ENCODE measurements at regions of chr12 and their contacts with region 1.

Region 1: DNA sequence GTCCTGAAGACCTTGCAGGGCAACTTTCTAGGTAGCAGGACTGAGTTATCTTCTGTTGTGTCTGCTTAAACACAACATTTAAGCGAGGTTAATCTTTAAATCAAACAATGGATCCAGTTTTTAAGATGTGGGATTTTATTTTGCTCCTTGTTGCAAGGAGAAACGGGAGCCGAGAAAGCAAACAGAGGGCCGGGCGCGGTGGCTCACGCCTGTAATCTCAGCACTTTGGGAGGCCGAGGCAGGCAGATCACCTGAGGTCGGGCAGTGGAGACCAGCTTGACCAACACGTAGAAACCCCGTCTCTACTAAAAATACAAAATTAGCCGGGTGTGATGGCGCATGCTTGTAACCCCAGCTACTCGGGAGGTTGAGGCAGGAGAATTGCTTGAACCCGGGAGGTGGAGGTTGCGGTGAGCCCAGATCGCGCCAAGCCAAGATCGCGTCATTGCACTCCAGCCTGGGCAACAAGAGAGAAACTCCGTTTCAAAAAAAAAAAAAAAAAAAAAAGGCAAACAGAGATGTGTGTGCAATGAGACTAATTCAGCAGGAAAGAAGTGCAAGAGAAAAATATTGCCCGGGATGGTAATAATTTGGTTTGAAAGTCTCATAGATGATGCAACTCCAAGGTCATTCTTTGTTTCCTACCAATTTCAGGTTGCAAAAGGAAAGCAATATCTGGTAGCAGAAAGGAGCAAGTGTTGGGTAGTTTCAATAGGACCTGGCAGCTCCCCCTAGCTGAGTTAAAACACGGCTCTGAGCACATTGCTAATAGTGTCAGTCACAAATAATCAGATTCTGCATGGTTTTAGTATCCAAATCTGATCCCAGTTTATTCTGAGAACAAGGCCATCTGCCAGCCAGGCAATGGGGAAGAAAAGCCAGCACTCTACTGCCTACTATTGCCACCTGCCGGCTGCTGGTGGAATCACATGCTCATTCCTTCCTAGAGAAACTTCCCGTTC is 141.4 kb downstream of the PPM1H start:
- DNase-seq: peak; percentile 81
- H3K4me3 ChIP-seq: peak overlapping the region in 1 of 2 experiments; percentile 22; a peak in 1 of 4 replicates
- H3K27ac ChIP-seq: peak overlapping the region; percentile 11 to 49; a peak in 3 of 4 replicates
- H3K4me1 ChIP-seq: peaks cover 2 to 11% of the 10 kb centered on the region in 2 experiments; a peak in 2 of 4 replicates
- H3K27me3 ChIP-seq: no peaks in the 10 kb centered on the region
- CTCF ChIP-seq: peak; percentile 96
- EP300 ChIP-seq: peak in 1 of 2 experiments; percentile 48; a peak in 1 of 4 replicates
- RAD21 ChIP-seq: peak; percentile 97

Region 2: GRCh38 chr12:62581288-62582064 is 212.1 kb before region 1 on chr12:
- CTCF ChIA-PET with region 1: interaction called, 200 read pairs
- POLR2A ChIA-PET with region 1: no interaction called
- DNase-seq: peak; percentile 39
- H3K4me3 ChIP-seq: no peak overlapping the region; a peak in 1 of 4 replicates
- H3K27ac ChIP-seq: no peak overlapping the region
- H3K4me1 ChIP-seq: no peaks in the 10 kb centered on the region
- H3K27me3 ChIP-seq: no peaks in the 10 kb centered on the region
- CTCF ChIP-seq: peak; percentile 78
- EP300 ChIP-seq: no peak
- RAD21 ChIP-seq: peak; percentile 82

Region 3: GRCh38 chr12:62588916-62589315 is 204.6 kb before region 1 on chr12:
- CTCF ChIA-PET with region 1: interaction called, 200 read pairs
- POLR2A ChIA-PET with region 1: no interaction called
- DNase-seq: no peak
- H3K4me3 ChIP-seq: no peak overlapping the region
- H3K27ac ChIP-seq: peak overlapping the region in 1 of 2 experiments; percentile 57; a peak in 2 of 4 replicates
- H3K4me1 ChIP-seq: peaks cover 0 to 5% of the 10 kb centered on the region in 2 experiments; a peak in 1 of 4 replicates
- H3K27me3 ChIP-seq: no peaks in the 10 kb centered on the region
- CTCF ChIP-seq: no peak
- EP300 ChIP-seq: no peak
- RAD21 ChIP-seq: no peak

Region 4: DNA sequence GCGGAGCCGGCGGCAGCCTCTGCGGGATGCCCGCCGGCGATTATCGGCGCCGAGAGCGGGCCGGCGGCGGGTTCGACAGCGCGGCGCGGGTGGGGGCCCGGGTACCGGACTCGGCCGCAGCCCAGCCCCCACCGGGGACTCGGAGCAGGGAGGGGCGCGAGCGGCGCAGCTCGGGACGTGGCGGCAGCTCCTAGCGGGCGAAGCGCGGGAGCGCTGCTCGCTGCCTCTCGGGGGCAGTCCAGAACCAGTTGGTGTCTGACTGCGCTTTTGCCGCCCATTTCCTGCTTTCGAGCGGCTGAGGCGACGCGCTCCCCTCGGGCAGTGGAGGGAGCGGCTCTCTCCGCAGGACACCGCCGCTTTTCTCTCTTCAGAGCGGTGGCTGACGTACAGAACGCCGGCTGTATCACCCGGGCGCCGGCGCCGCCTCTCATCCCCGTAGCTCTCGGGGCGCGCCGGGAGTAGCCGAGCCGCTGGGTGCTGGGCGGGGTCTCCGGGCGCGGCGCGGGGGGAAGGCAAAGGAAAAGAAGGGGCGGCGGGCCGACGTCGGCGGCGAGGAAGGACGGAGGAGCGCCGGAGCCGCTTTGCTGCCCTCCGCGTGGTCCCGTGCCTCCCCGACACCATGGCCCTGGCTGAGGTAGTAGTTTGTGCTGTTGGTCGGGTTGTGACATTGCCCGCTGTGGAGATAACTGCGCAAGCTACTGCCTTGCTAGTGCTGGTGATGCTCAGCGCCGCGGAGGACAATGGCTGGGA is 190.3 kb before region 1 on chr12:
- CTCF ChIA-PET with region 1: interaction called, 42 read pairs
- POLR2A ChIA-PET with region 1: interaction called, 9 read pairs
- DNase-seq: peak; percentile 90
- H3K4me3 ChIP-seq: peak overlapping the region; percentile 88 to 91
- H3K27ac ChIP-seq: peak overlapping the region; percentile 98 to 100
- H3K4me1 ChIP-seq: no peaks in the 10 kb centered on the region; a peak in 2 of 4 replicates
- H3K27me3 ChIP-seq: no peaks in the 10 kb centered on the region
- CTCF ChIP-seq: peak; percentile 42
- EP300 ChIP-seq: peak in 1 of 2 experiments; percentile 20; a peak in 1 of 4 replicates
- RAD21 ChIP-seq: peak; percentile 53

Region 5: DNA sequence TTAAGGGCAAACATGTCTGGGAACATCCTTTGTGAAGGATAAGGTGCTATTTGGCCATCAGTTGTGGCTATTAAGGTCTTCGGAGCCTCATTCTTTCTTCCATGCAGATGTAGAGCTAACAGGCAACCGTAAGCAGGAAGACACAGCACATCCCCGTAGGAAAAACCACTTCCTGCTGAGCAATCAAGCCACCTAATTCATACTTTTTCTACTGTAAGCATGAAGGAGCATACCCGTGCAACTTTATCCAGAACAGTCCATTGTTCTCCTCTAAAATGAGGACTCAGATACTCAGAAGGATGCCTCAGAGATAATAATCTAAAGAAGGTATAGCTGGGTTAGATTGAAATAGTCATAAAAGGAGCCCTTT is 90.5 kb before region 1 on chr12:
- CTCF ChIA-PET with region 1: no interaction called
- POLR2A ChIA-PET with region 1: no interaction called
- DNase-seq: no peak
- H3K4me3 ChIP-seq: peak overlapping the region in 1 of 2 experiments; percentile 33; a peak in 1 of 4 replicates
- H3K27ac ChIP-seq: peak overlapping the region; percentile 72 to 97; a peak in 3 of 4 replicates
- H3K4me1 ChIP-seq: peaks cover 10 to 41% of the 10 kb centered on the region in 2 experiments; a peak in 3 of 4 replicates
- H3K27me3 ChIP-seq: no peaks in the 10 kb centered on the region
- CTCF ChIP-seq: no peak
- EP300 ChIP-seq: no peak
- RAD21 ChIP-seq: no peak

Region 6: GRCh38 chr12:62763861-62764645 is 29.5 kb before region 1 on chr12:
- CTCF ChIA-PET with region 1: interaction called, 11 read pairs
- POLR2A ChIA-PET with region 1: no interaction called
- DNase-seq: no peak
- H3K4me3 ChIP-seq: no peak overlapping the region
- H3K27ac ChIP-seq: peak overlapping the region in 1 of 2 experiments; percentile 55; a peak in 1 of 4 replicates
- H3K4me1 ChIP-seq: no peaks in the 10 kb centered on the region; a peak in 1 of 4 replicates
- H3K27me3 ChIP-seq: no peaks in the 10 kb centered on the region
- CTCF ChIP-seq: no peak
- EP300 ChIP-seq: no peak
- RAD21 ChIP-seq: no peak

Region 7: DNA sequence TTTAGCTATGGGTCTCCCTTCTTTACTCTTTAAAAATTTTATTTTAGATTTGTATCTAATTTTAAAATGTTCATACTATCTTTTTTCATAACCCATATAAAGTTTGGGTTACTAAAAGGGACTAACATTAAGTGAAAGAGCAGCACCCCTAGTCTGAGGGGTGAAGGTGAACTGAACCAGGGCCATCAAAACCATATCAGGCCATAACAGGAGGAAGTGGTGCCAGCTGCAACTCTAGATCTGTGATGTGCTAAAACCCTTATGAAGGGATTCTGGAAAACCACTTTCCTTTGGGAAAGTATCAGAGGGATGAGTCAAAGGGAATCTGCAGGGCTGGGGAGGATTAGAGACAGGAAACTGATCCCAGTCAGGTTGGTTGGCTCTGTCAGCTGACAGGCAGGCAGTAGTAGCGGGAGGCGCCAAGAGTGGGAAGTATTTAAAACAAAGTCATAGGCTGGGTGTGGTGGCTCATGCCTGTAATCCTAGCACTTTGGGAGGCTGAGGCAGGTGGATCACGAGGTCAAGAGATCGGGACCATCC is 21.1 kb before region 1 on chr12:
- CTCF ChIA-PET with region 1: interaction called, 11 read pairs
- POLR2A ChIA-PET with region 1: no interaction called
- DNase-seq: no peak
- H3K4me3 ChIP-seq: no peak overlapping the region
- H3K27ac ChIP-seq: no peak overlapping the region
- H3K4me1 ChIP-seq: no peaks in the 10 kb centered on the region
- H3K27me3 ChIP-seq: no peaks in the 10 kb centered on the region
- CTCF ChIP-seq: no peak
- EP300 ChIP-seq: no peak
- RAD21 ChIP-seq: no peak

Region 8: DNA sequence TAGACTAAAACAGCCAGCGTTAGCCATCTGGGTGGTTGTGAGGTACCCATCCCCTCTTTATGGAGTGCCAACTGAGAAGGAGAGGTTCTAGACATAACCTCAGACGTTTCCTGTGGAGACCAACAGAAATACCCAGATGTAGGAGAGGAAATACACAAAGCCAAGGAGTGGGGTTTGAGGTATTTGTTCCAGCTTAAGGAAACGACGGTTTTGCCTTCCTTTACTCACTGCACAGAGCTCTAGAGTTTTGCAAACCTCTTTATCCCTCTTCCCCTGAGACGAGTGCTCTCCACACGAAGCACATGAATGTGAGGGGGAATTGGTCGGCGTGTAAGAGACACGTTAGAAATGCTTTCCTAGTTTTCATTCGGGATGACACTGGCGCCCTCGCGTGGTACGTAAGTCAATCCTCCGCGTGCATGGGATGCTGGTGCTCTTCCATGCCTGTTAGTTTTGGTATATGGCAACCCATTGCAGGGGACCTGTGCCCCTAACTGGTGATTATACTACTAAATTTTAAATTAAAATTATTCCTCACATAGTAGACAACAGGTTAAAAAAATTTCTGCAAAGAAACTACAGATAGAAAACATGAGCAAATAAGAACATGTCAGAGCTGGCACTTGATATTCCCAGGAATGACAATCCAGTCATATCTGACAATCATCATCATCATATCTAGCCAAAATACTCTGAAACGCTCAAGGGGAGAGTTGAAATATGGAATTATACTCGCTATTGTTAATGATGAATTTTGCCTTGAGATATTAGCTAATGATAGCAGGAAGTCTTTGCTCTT is 19.7 kb after region 1 on chr12:
- CTCF ChIA-PET with region 1: interaction called, 68 read pairs
- POLR2A ChIA-PET with region 1: no interaction called
- DNase-seq: peak; percentile 63
- H3K4me3 ChIP-seq: peak overlapping the region in 1 of 2 experiments; percentile 46; a peak in 2 of 4 replicates
- H3K27ac ChIP-seq: no peak overlapping the region
- H3K4me1 ChIP-seq: peaks cover 0 to 3% of the 10 kb centered on the region in 2 experiments; a peak in 2 of 4 replicates
- H3K27me3 ChIP-seq: peaks cover 9% of the 10 kb centered on the region; the same call in 1 of the 2 replicates
- CTCF ChIP-seq: peak; percentile 82
- EP300 ChIP-seq: no peak
- RAD21 ChIP-seq: peak; percentile 75

Region 9: GRCh38 chr12:62900686-62901272 is 107.2 kb after region 1 on chr12:
- CTCF ChIA-PET with region 1: no interaction called
- POLR2A ChIA-PET with region 1: no interaction called
- DNase-seq: no peak
- H3K4me3 ChIP-seq: no peak overlapping the region
- H3K27ac ChIP-seq: no peak overlapping the region
- H3K4me1 ChIP-seq: no peaks in the 10 kb centered on the region
- H3K27me3 ChIP-seq: peaks cover 7% of the 10 kb centered on the region; the same call in 1 of the 2 replicates
- CTCF ChIP-seq: no peak
- EP300 ChIP-seq: no peak
- RAD21 ChIP-seq: no peak

Measured in SK-N-SH (cell line).